Activated T-helper 2 cell treated with anti-CD3 and anti-CD28 coated beads, Interferon-gamma antibody, Interleukin-2, Interleukin-4, amounts not matched to agents 10 μg/mL and 5 μg/mL and 100 μg/mL, durations not matched to agents 14 hours and 24 hours and 36 hours (primary cell): ENCODE measurements at regions of chr6 and their contacts with region 1.

Region 1: GRCh38 chr6:166942393-166943168 is 13.8 kb downstream of the RNASET2 start:
- DNase-seq: peak; percentile 61
- H3K4me3 Mint-ChIP-seq: peak overlapping the region; percentile 56
- H3K27ac Mint-ChIP-seq: peak overlapping the region; percentile 94
- H3K4me1 Mint-ChIP-seq: peaks cover 29% of the 10 kb centered on the region
- H3K27me3 Mint-ChIP-seq: no peaks in the 10 kb centered on the region

Region 2: GRCh38 chr6:166530211-166531095 is 412.1 kb before region 1 on chr6:
- intact Hi-C with region 1: no loop called
- DNase-seq: no peak
- H3K4me3 Mint-ChIP-seq: no peak overlapping the region
- H3K27ac Mint-ChIP-seq: no peak overlapping the region
- H3K4me1 Mint-ChIP-seq: no peaks in the 10 kb centered on the region
- H3K27me3 Mint-ChIP-seq: no peaks in the 10 kb centered on the region

Region 3: DNA sequence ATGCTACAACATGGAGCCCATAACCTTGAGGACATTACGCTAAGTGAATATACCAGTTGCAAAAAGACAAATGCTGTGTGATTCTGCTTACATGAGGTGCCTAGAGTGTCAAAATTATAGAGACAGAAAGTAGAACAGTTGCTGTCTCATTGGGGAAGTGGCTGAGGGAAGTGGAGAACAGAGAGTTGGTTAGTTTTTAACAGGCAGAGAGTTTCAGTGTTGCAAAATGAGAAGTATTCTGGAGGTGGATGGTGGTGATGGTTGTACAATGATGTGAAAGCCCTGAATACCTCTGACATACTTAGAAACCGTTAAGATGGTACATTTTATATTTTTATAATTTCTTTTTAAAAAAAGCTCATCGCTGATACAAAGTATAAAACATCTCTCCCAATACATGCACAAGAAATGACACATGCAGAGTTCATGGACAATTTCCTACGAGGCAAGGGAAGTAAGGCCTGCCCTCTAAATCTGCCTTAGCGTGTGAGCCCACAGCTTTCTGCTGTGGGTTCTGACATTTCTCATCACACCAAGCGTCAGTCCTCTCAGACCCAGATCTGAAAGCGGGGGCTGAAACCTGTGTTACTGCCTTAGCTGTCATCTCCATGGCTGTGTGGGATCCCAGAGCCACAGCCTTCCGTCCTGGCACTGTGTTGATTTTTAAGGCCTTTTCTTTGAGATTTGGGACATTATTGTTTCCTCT is 112.2 kb before region 1 on chr6:
- intact Hi-C with region 1: loop called (anchors 1 kb)
- DNase-seq: no peak
- H3K4me3 Mint-ChIP-seq: no peak overlapping the region
- H3K27ac Mint-ChIP-seq: peak overlapping the region; percentile 76
- H3K4me1 Mint-ChIP-seq: peaks cover 20% of the 10 kb centered on the region
- H3K27me3 Mint-ChIP-seq: peaks cover 4% of the 10 kb centered on the region

Region 4: DNA sequence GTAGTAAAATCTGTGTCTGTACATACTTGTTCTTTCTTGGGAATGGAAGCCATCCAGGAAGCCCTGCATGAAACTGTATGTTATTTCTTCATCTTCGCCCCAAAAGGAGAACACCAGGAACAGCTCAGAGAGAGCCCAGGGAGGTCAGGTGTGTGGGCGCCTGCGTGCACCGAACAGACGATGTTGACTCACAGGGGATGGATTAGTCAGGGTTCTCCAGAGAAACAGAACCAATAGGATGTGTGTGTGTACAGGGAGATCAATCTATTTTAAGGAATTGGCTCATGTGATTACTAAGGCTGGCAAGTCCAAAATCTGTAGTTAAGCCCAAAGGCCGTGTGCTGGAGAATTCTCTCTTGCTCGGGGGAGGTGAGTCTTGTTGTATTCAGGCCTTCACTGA is 32.0 kb before region 1 on chr6:
- intact Hi-C with region 1: loop called (anchors 1 kb)
- DNase-seq: no peak
- H3K4me3 Mint-ChIP-seq: no peak overlapping the region
- H3K27ac Mint-ChIP-seq: peak overlapping the region; percentile 20
- H3K4me1 Mint-ChIP-seq: peaks cover 42% of the 10 kb centered on the region
- H3K27me3 Mint-ChIP-seq: no peaks in the 10 kb centered on the region

Region 5: DNA sequence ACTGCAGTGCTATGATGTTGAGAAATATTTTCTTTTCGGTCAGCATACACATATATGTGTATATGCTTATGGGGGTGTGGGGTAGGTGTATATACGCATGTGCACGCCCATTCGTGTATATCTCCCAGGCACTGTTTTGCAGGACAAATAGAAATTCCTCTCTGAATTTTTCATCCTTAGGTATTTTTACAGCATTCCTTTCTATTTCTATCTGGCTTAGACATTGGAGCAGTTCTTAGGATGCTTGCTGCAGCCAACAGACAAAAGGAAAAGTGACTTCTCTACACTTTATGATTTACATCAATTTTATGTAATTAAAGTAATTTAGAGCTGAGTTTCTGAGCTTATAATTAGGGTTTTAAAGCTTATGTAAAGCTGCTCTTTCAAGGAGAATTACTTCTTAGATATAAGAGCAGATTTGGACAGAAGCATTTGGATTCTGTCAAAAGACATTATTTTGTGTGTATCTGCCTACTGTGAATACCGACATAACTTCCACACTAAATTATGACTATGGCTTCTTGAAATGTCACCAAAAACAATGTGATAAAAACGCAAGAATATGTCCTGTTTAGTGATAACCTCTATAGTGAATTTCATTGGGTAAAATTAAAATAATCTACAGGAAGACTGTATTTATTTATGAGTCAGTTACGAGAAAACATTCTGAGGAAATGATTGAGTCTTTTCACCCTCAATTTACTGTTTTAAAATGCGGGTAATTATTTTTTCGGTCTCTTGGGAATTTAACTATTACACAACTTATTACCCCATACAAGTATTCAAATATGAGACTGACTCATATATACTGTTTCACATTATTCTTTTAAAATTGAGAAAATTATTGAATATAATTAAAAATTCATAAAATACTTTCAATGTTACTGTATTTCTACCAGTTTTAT is 35.3 kb after region 1 on chr6:
- intact Hi-C with region 1: no loop called
- DNase-seq: no peak
- H3K4me3 Mint-ChIP-seq: no peak overlapping the region
- H3K27ac Mint-ChIP-seq: no peak overlapping the region
- H3K4me1 Mint-ChIP-seq: peaks cover 7% of the 10 kb centered on the region
- H3K27me3 Mint-ChIP-seq: no peaks in the 10 kb centered on the region